Natural killer cell (primary cell): ENCODE measurements at regions of chr22 and their contacts with region 1.

Region 1: GRCh38 chr22:38755911-38756532 is at the start of gene SUN2:
- DNase-seq: peak; percentile 96 to 97
- ATAC-seq: peak; percentile 76 to 90 (median 82)
- H3K4me3 ChIP-seq: peak within 1 kb of the TSS; percentile 93
- H3K4me3 Mint-ChIP-seq: peak within 1 kb of the TSS; percentile 99
- H3K27ac ChIP-seq: peak within 1 kb of the TSS; percentile 86
- H3K27ac Mint-ChIP-seq: peak within 1 kb of the TSS; percentile 88 to 98
- H3K4me1 ChIP-seq: peaks cover 79% of the 10 kb centered on the region
- H3K4me1 Mint-ChIP-seq: peaks cover 64 to 69% of the 10 kb centered on the region in 2 donors
- H3K27me3 ChIP-seq: no peaks in the 10 kb centered on the region
- H3K27me3 Mint-ChIP-seq: no peaks in the 10 kb centered on the region
- CTCF ChIP-seq: no peak
- total RNA-seq, gene SUN2: 882 to 1,056 (median 886) TPM

Region 2: DNA sequence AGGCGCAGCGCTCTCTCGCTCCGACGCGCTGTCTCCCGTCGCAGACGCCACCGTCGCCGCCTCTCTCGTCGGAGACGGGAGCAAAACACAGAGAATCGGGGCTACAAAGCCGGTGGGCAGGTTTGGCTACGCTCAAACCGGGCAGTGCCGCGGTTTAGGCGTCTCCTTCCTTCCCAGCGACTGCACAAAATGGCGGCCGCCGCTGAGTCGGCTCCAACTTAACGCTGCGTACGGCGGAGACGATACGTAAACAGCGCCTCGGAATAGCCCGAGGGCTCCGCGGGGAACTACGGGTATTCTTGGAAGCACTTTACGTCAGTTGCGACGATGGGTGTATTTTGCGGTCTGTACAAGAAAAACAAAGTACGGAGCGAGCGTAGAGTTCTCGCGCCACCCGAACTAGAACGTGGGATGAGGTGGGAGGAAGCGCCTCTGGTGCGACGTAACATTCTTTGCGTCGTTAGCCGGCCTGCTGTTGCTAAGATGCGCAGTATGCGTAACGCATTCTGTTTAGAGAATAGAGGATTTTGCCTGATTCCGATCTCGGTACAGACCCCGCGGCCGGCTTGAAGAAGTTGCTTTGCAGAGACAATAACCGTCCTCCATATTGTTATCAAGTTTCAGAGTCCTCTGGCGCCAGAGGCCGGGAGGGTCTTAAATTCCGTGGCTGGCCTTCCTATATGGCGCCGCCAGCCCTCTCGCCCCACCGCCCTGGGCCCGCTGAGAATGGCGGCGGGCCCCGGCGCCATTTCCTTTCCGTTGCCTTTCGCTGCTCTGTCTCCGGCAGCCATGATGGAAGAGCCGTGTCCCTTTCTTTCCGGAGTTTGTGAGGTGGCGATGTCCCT is 249.7 kb before region 1 on chr22 and contains the start of gene DDX17:
- intact Hi-C with region 1: loop called (anchors 10 kb)
- DNase-seq: peak; percentile 91 to 99
- ATAC-seq: peak; percentile 86 to 96 (median 89)
- H3K4me3 ChIP-seq: peak within 1 kb of the TSS; percentile 80
- H3K4me3 Mint-ChIP-seq: peak within 1 kb of the TSS; percentile 100
- H3K27ac ChIP-seq: peak within 1 kb of the TSS; percentile 99
- H3K27ac Mint-ChIP-seq: peak within 1 kb of the TSS; percentile 100
- H3K4me1 ChIP-seq: peaks cover 22% of the 10 kb centered on the region
- H3K4me1 Mint-ChIP-seq: peaks cover 47 to 59% of the 10 kb centered on the region in 2 donors
- H3K27me3 ChIP-seq: no peaks in the 10 kb centered on the region
- H3K27me3 Mint-ChIP-seq: no peaks in the 10 kb centered on the region
- CTCF ChIP-seq: no peak
- total RNA-seq, gene DDX17: 571 to 752 (median 578) TPM

Region 3: GRCh38 chr22:38564669-38565068 is 191.4 kb before region 1 on chr22:
- intact Hi-C with region 1: no loop called
- DNase-seq: no peak
- ATAC-seq: no peak
- H3K4me3 ChIP-seq: no peak overlapping the region
- H3K4me3 Mint-ChIP-seq: no peak overlapping the region
- H3K27ac ChIP-seq: no peak overlapping the region
- H3K27ac Mint-ChIP-seq: no peak overlapping the region
- H3K4me1 ChIP-seq: peaks cover 4% of the 10 kb centered on the region
- H3K4me1 Mint-ChIP-seq: peaks cover 0 to 2% of the 10 kb centered on the region in 2 donors
- H3K27me3 ChIP-seq: no peaks in the 10 kb centered on the region
- H3K27me3 Mint-ChIP-seq: no peaks in the 10 kb centered on the region
- CTCF ChIP-seq: no peak

Region 4: DNA sequence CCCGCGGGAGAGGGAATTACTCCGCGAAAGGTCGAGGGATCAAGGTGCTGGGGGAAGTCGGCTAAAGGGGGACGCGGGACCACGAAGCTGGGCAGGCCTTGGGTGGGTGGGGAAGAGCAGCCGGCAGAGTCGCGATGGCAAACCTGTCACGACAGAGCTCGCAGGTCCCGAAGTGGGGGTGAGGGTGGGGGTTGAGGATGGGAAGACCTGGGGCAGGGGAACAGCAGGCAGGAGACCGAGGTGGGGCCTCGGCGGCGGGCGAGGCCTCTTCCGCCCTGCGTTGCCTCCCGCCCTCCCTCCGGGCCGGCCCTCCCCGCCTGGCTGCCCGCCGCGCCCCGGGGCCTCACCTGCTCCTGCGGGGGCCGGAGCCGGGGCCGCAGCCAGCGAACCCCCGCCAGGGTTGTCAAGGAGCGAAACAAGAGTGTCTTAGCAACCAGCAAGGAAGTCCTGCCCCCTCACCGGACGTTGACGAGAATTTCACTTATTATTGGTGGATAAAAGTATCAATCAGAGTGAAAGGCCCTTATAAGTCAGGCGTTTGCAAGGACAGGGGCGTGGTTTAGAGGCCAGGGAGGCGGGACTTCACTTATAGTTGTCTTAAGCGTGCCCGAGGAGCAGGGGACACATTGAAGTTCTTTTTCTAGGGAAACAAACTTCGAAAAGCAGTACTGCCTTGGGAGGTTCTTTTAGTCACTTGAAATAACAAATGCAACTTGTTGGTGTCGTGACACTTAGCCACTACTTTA is 37.9 kb after region 1 on chr22 and contains the start of gene DNAL4:
- intact Hi-C with region 1: loop called (anchors 5 kb)
- DNase-seq: peak; percentile 84 to 97
- ATAC-seq: peak; percentile 94 to 98 (median 97)
- H3K4me3 ChIP-seq: peak within 1 kb of the TSS; percentile 60
- H3K4me3 Mint-ChIP-seq: peak within 1 kb of the TSS; percentile 94
- H3K27ac ChIP-seq: peak within 1 kb of the TSS; percentile 61
- H3K27ac Mint-ChIP-seq: peak within 1 kb of the TSS; percentile 87 to 93
- H3K4me1 ChIP-seq: peaks cover 12% of the 10 kb centered on the region
- H3K4me1 Mint-ChIP-seq: peaks cover 13 to 26% of the 10 kb centered on the region in 2 donors
- H3K27me3 ChIP-seq: no peaks in the 10 kb centered on the region
- H3K27me3 Mint-ChIP-seq: peaks cover 21 to 27% of the 10 kb centered on the region in 2 donors
- CTCF ChIP-seq: no peak
- total RNA-seq, gene DNAL4: 5.4 to 9.8 (median 6.2) TPM